ENCODE measurements at regions of chr6 and their contacts with region 1.

Region 1: GRCh38 chr6:73461537-73462350 is at the start of gene MTO1:
- DNase-seq: peak; percentile 66 to 91 (median 81)
- ATAC-seq: peak; percentile 93 to 95
- H3K4me3 Mint-ChIP-seq: peak within 1 kb of the TSS; percentile 93 to 100 (median 97)
- H3K27ac Mint-ChIP-seq: peak within 1 kb of the TSS; percentile 94 to 99 (median 98)
- H3K4me1 Mint-ChIP-seq: peaks cover 4 to 49% (median 29%) of the 10 kb centered on the region in 4 donors
- H3K27me3 Mint-ChIP-seq: no peaks in the 10 kb centered on the region
- polyA plus RNA-seq, gene MTO1: 23.6 to 33.0 (median 25.0) TPM

Region 2: GRCh38 chr6:73329201-73329600 is 132.5 kb before region 1 on chr6:
- POLR2A ChIA-PET with region 1: no interaction called
- DNase-seq: no peak
- ATAC-seq: no peak
- H3K4me3 Mint-ChIP-seq: no peak overlapping the region
- H3K27ac Mint-ChIP-seq: no peak overlapping the region
- H3K4me1 Mint-ChIP-seq: peaks cover 0 to 3% (median 0%) of the 10 kb centered on the region in 4 donors
- H3K27me3 Mint-ChIP-seq: peaks cover 7 to 32% (median 11%) of the 10 kb centered on the region in 5 donors

Region 3: GRCh38 chr6:73421534-73421933 is 40.2 kb before region 1 on chr6:
- POLR2A ChIA-PET with region 1: interaction called, 12 read pairs
- DNase-seq: no peak
- ATAC-seq: no peak
- H3K4me3 Mint-ChIP-seq: peak overlapping the region in 5 of 10 donors; percentile 33 to 70 (median 49)
- H3K27ac Mint-ChIP-seq: peak overlapping the region; percentile 80 to 97 (median 94)
- H3K4me1 Mint-ChIP-seq: peaks cover 4 to 22% (median 15%) of the 10 kb centered on the region in 4 donors
- H3K27me3 Mint-ChIP-seq: no peaks in the 10 kb centered on the region

Region 4: DNA sequence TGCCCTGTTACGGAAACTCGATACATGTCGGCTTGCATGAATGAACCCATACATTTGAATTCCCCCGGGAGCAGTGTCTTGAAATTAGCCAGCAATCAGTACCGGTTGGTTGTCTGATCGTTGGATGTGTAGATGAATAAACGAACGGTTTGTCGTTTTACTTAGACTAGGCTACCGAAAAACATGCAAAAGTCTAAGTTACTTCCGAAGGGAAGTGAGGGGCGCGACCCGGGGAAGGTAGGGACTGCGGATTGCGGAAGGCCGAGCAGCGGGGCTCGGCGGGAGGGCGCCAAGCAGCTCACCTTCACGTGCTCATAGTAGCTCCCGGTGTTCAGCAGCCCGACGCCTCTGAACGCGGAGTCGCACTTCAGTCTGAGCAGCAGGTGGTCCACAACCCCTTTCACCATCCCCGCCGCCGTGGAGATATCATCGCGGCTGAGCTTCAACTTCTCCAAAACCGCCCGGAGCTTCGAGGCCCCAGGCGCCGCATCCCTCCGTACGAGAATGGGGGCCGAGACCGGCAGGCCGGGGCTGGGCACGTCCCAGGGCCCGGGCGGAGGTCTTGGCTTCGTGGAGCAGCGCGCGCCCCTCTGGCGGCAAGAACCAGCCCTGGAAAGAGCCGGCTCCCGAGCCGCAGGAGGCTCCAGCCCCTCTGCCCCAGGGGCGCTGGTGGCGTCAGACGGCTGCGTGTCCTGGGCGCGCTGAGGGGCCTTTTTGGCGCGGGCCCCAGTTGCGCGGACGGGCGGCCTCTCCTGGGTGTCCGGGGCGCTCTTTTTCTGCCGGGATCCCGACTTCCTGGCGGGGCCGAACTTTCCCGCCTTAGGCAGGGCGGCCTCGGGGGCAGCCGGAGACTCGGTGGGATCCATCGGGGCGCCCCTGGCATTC is 10.3 kb before region 1 on chr6:
- POLR2A ChIA-PET with region 1: interaction called, 65 read pairs
- DNase-seq: peak in 9 of 10 donors; percentile 27 to 68 (median 39)
- ATAC-seq: peak; percentile 68 to 78
- H3K4me3 Mint-ChIP-seq: peak overlapping the region; percentile 63 to 93 (median 89)
- H3K27ac Mint-ChIP-seq: peak overlapping the region; percentile 55 to 89 (median 80)
- H3K4me1 Mint-ChIP-seq: peaks cover 10 to 39% (median 30%) of the 10 kb centered on the region in 4 donors
- H3K27me3 Mint-ChIP-seq: no peaks in the 10 kb centered on the region

Measured in naive thymus-derived CD8-positive, alpha-beta T cell (primary cell).